Gastrocnemius medialis (tissue), 4 donors: ENCODE measurements at regions of chr2 and their contacts with region 1.

Region 1: GRCh38 chr2:99337113-99338028 is at the start of gene EIF5B:
- DNase-seq: peak; percentile 95 to 96
- ATAC-seq: peak; percentile 77 to 81
- H3K4me3 ChIP-seq: peak within 1 kb of the TSS; percentile 87 to 98 (median 92)
- H3K27ac ChIP-seq: peak within 1 kb of the TSS; percentile 94 to 98 (median 97)
- H3K4me1 ChIP-seq: peaks cover 35 to 38% of the 10 kb centered on the region in 2 donors
- H3K27me3 ChIP-seq: no peaks in the 10 kb centered on the region
- CTCF ChIP-seq: peak in 4 of 5 experiments; percentile 38 to 69 (median 54)
- POLR2A ChIP-seq: peak; percentile 82 to 85
- total RNA-seq, gene EIF5B: 33.0 to 71.3 (median 50.7) TPM

Region 2: DNA sequence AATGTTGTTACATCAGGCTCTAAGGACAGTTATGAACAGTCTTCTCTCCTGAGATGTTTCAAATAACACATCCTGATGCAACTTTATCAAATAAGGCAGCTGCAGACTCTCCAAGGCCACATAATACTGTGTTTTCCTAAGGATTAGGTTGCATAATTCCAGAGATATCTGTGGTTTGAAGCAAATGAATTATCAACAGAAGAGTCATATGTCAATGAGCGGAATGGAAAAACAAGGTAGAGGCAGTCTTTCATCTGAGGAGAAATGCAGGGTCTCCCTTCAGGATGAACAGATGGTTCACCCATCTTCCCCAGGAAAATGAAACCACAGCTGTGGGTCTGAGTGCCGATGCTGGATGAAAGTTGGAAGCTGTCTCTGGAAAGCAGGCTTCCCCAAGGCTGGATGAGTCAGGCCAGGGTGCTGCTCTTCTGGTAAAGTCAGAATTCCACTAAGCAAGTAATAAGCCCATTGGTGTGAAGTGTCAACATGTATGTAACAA is 58.5 kb before region 1 on chr2:
- in situ Hi-C with region 1: no loop called
- intact Hi-C with region 1: no loop called
- DNase-seq: no peak
- ATAC-seq: peak in 1 of 2 donors; percentile 55
- H3K4me3 ChIP-seq: no peak overlapping the region
- H3K27ac ChIP-seq: no peak overlapping the region
- H3K4me1 ChIP-seq: no peaks in the 10 kb centered on the region
- H3K27me3 ChIP-seq: no peaks in the 10 kb centered on the region
- CTCF ChIP-seq: no peak
- POLR2A ChIP-seq: no peak

Region 3: DNA sequence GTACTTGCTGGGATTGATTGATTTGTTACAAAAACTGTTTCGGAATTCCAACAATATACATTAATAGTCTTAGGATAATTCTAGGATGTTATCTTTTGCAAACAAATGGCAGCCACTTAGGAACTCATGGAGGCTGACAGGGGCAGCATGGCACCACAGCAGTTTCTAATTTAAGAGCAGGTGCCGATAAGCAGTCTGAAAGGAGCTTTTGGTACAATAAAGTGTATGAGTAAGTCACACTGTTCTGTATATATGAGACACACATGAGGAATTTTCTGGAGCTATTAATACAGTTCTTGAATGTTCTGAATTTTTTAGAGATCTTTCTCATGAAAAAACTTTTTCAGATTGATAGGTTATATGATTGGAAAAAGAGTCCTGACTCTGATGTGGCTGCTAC is 52.0 kb after region 1 on chr2:
- in situ Hi-C with region 1: no loop called
- intact Hi-C with region 1: loop called (anchors 5 kb)
- DNase-seq: no peak
- ATAC-seq: peak; percentile 39 to 66
- H3K4me3 ChIP-seq: no peak overlapping the region
- H3K27ac ChIP-seq: peak overlapping the region; percentile 58 to 64 (median 62)
- H3K4me1 ChIP-seq: peaks cover 12 to 16% of the 10 kb centered on the region in 2 donors
- H3K27me3 ChIP-seq: no peaks in the 10 kb centered on the region
- CTCF ChIP-seq: no peak
- POLR2A ChIP-seq: no peak